ENCODE measurements at regions of chr6 and their contacts with region 1.

Region 1: DNA sequence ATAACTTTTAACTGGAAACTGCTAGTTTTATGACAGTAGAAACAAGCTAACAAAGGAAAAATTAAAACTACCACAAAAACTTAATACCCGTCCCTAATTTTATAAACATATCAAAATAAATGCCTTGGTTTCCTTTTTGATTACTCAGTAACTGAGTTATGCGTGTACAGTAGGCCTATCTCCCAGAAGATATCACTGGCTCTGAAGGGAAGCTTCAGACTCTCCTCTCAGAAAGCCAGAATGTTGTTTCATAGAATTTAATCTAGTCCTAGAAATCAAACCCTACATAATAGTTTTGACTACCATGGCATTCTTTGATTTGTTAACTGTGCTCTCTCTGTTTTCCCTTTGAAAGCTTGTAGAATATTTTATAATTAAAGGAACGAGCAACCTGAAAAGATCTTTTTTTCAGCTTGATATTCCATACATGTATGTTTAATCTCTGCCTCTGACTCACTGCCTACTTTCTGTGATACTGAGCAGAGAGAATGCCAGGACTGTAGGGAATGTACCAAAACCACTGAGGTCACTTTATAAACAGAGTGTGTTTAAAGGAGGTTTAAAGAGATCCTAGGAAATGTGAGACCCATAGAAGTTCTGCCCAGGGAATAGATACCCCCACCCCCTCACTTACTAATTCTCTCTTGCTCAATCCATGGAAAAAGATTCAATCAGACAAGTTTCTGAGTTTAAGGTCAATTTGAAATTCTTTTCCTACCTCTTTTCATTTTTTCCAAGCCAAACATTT is 311.5 kb downstream of the HDGFL1 start:
- DNase-seq: no peak
- H3K4me3 ChIP-seq: peak overlapping the region in 1 of 2 donors; percentile 1
- H3K27ac ChIP-seq: peak overlapping the region; percentile 55 to 71
- H3K4me1 ChIP-seq: peaks cover 0 to 3% of the 10 kb centered on the region in 2 donors
- H3K27me3 ChIP-seq: no peaks in the 10 kb centered on the region
- CTCF ChIP-seq: no peak

Region 2: DNA sequence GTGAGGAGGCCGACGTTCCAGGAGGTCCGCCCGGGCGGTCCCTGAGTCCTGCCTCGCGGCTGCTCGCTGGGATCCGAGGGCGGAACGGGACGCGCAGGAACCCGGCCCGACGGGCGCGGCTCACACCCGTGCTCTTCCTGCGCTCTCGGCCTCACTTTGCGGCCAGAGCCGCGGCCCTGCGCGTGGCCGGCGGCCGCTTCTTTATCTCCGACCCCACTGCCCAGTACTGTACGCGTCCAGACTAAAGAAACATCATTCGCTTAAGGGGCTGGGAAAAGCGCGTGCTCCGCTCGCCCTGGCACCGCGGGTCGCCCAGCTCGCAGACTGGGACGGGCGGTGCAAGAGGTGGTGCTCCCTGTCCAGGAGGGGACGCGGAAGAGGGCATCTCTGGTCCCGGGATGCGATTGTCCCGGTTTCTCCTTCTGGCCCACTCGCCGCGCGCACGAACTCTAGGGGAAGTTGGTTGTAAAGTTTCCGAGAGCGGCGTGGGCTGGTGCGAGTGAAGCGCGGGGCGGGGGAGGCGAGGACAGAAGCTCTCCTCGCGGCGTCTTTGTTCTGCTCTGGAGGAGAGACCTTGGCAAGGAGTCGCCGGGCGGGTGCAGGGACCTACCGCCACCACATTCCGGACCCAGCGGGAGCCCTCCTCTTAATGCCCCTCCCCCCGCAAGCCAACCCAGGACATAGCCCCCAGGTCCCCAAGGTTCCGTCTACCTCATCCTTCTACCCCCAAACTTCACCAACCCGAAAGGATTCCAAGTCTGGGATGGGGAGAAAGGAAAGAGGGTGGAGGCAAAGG is 1216.3 kb before region 1 on chr6:
- intact Hi-C with region 1: loop called (anchors 10 kb)
- DNase-seq: no peak
- H3K4me3 ChIP-seq: peak overlapping the region; percentile 66 to 76
- H3K27ac ChIP-seq: peak overlapping the region; percentile 52 to 66
- H3K4me1 ChIP-seq: peaks cover 0 to 10% of the 10 kb centered on the region in 2 donors
- H3K27me3 ChIP-seq: no peaks in the 10 kb centered on the region
- CTCF ChIP-seq: peak in 1 of 3 experiments; percentile 10

Region 3: GRCh38 chr6:22828179-22829062 is 52.4 kb before region 1 on chr6:
- intact Hi-C with region 1: loop called (anchors 2 kb)
- DNase-seq: peak in 1 of 2 donors; percentile 71
- H3K4me3 ChIP-seq: peak overlapping the region in 1 of 2 donors; percentile 19
- H3K27ac ChIP-seq: peak overlapping the region; percentile 73 to 87
- H3K4me1 ChIP-seq: peaks cover 0 to 18% of the 10 kb centered on the region in 2 donors
- H3K27me3 ChIP-seq: no peaks in the 10 kb centered on the region
- CTCF ChIP-seq: peak; percentile 60 to 69 (median 68)

Region 4: GRCh38 chr6:22892452-22892851 is 11.6 kb after region 1 on chr6:
- intact Hi-C with region 1: loop called (anchors 1 kb)
- DNase-seq: no peak
- H3K4me3 ChIP-seq: no peak overlapping the region
- H3K27ac ChIP-seq: peak overlapping the region; percentile 80 to 86
- H3K4me1 ChIP-seq: peaks cover 0 to 10% of the 10 kb centered on the region in 2 donors
- H3K27me3 ChIP-seq: no peaks in the 10 kb centered on the region
- CTCF ChIP-seq: no peak

Region 5: GRCh38 chr6:23388086-23388783 is 507.4 kb after region 1 on chr6:
- intact Hi-C with region 1: no loop called
- DNase-seq: no peak
- H3K4me3 ChIP-seq: no peak overlapping the region
- H3K27ac ChIP-seq: no peak overlapping the region
- H3K4me1 ChIP-seq: no peaks in the 10 kb centered on the region
- H3K27me3 ChIP-seq: no peaks in the 10 kb centered on the region
- CTCF ChIP-seq: no peak